ENCODE measurements at regions of chr22 and their contacts with region 1.

Region 1: DNA sequence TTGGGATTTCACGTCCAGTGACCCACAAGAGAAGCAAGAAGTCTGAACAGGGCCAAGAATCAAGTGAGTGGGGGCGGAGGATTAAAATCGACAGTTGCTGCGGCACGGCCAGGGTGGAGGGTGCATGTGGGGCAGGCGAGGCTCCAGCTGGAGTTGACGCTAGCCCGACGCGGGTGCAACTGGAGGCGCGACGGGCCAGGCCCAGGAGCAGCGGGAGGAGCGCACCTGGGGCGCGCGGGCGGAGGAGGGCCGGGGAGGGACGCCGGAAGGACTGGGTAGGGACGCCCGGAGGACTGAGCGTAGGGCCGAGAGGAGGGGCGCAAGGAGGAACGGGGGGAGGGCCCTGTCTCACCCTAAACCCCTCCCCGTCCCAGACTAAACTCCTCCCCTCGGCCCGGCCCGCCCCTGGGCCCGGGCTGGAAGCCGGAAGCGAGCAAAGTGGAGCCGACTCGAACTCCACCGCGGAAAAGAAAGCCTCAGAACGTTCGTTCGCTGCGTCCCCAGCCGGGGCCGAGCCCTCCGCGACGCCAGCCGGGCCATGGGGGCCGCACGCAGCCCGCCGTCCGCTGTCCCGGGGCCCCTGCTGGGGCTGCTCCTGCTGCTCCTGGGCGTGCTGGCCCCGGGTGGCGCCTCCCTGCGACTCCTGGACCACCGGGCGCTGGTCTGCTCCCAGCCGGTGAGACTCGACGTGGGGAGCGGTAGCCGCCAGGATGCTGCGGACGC is at the start of gene IL17RA:
- DNase-seq: peak; percentile 90 to 98 (median 94)
- ATAC-seq: peak; percentile 90
- H3K4me3 ChIP-seq: peak within 1 kb of the TSS; percentile 48 to 80
- H3K4me3 Mint-ChIP-seq: peak within 1 kb of the TSS; percentile 96
- H3K27ac ChIP-seq: peak within 1 kb of the TSS; percentile 65 to 79
- H3K27ac Mint-ChIP-seq: peak within 1 kb of the TSS; percentile 91
- H3K4me1 ChIP-seq: peaks cover 34% of the 10 kb centered on the region
- H3K4me1 Mint-ChIP-seq: peaks cover 41% of the 10 kb centered on the region
- H3K27me3 ChIP-seq: no peaks in the 10 kb centered on the region
- H3K27me3 Mint-ChIP-seq: no peaks in the 10 kb centered on the region
- CTCF ChIP-seq: no peak
- total RNA-seq, gene IL17RA: 20.4 to 24.7 TPM

Region 2: GRCh38 chr22:17095538-17095937 is 10.8 kb after region 1 on chr22:
- CTCF ChIA-PET with region 1: interaction called, 21 read pairs
- POLR2A ChIA-PET with region 1: interaction called, 12 read pairs
- intact Hi-C with region 1: loop called (anchors 1 to 2 kb)
- DNase-seq: no peak
- ATAC-seq: no peak
- H3K4me3 ChIP-seq: no peak overlapping the region
- H3K4me3 Mint-ChIP-seq: no peak overlapping the region
- H3K27ac ChIP-seq: no peak overlapping the region
- H3K27ac Mint-ChIP-seq: peak overlapping the region; percentile 62
- H3K4me1 ChIP-seq: peaks cover 85% of the 10 kb centered on the region
- H3K4me1 Mint-ChIP-seq: peaks cover 87% of the 10 kb centered on the region
- H3K27me3 ChIP-seq: no peaks in the 10 kb centered on the region
- H3K27me3 Mint-ChIP-seq: no peaks in the 10 kb centered on the region
- CTCF ChIP-seq: no peak

Region 3: DNA sequence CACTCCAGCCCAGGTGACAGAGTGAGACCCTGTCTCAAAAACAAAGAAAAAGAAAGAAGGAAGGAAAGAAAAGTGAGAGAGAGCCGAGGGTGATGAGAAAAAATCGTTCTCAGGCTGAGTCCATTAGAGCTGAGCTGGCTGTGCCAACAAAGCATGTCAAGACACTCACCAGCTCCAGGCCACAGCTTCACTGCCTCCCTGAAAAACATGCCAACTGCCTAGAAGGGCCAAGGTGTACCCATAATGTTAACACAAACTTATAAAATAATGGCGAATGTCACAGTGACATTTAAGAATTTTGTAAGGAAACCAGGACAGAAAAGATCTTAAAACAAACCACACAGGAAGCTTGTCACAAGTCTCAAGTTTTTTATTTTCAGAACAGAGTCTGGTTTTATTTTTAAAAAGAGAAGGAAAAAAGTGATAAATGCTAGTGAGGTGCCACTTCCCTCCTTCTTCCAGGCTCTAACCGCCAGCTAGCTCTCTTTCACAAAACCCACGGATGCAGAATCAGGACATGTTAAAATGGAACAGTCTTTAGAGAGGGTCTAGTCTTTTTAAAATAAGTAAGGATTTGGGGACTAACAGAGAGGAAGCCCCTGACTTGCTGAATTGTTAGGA is 31.3 kb after region 1 on chr22:
- CTCF ChIA-PET with region 1: interaction called, 3 read pairs
- POLR2A ChIA-PET with region 1: interaction called, 16 read pairs
- intact Hi-C with region 1: loop called (anchors 2 to 5 kb)
- DNase-seq: peak in 1 of 9 experiments; percentile 28
- ATAC-seq: no peak
- H3K4me3 ChIP-seq: no peak overlapping the region
- H3K4me3 Mint-ChIP-seq: peak overlapping the region; percentile 65
- H3K27ac ChIP-seq: peak overlapping the region; percentile 6 to 60
- H3K27ac Mint-ChIP-seq: peak overlapping the region; percentile 83
- H3K4me1 ChIP-seq: peaks cover 63% of the 10 kb centered on the region
- H3K4me1 Mint-ChIP-seq: peaks cover 77% of the 10 kb centered on the region
- H3K27me3 ChIP-seq: no peaks in the 10 kb centered on the region
- H3K27me3 Mint-ChIP-seq: no peaks in the 10 kb centered on the region
- CTCF ChIP-seq: no peak

Region 4: GRCh38 chr22:17145021-17145680 is 60.4 kb after region 1 on chr22:
- CTCF ChIA-PET with region 1: no interaction called
- POLR2A ChIA-PET with region 1: no interaction called
- intact Hi-C with region 1: no loop called
- DNase-seq: no peak
- ATAC-seq: no peak
- H3K4me3 ChIP-seq: no peak overlapping the region
- H3K4me3 Mint-ChIP-seq: no peak overlapping the region
- H3K27ac ChIP-seq: no peak overlapping the region
- H3K27ac Mint-ChIP-seq: no peak overlapping the region
- H3K4me1 ChIP-seq: no peaks in the 10 kb centered on the region
- H3K4me1 Mint-ChIP-seq: peaks cover 5% of the 10 kb centered on the region
- H3K27me3 ChIP-seq: no peaks in the 10 kb centered on the region
- H3K27me3 Mint-ChIP-seq: no peaks in the 10 kb centered on the region
- CTCF ChIP-seq: no peak

Region 5: DNA sequence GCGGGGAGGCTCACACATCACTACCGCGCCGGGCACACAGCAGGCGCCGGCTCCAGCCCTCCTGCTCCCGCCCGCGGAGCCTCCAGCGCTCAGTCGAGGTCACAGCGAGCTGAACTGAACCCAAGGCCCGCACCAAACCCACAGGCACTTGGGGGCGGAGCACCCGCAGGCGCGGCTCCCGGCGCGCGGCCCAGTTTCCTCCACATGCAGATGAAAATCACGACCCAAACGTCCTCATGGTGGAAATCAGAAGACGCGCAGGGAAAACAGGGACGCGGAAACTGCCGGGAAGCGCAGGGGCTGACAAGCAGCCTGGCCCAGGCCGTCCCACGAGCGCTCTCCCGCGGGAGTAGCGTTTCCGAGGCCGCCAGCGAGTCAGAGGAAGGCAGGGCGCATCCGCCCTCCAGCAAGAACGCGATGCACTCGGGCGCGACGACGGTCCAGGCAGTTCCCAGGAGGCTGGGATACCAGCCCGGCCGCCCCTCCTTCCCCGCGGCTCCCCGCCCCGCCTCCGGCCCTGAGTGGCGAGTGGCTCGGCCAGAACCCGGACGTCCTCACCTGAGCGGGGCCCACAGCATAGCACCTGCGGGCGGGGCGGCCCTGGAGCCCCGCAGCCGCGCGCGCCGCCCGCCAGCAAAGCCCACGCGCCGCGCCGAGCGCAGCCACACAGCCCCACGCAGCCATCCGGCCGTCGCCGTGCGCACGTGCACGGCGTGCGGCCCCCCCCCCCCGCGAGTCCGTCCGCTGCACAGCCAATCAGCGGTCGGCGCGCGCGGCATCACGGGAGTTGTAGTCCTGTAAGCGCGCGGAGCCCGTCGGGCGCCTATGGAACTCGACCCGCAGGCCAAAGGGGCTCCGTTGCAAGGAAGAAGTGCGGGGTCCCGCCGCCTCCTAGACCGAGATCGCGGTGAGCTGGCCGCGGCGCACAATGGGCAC is 74.1 kb after region 1 on chr22 and contains the start of gene HDHD5:
- CTCF ChIA-PET with region 1: interaction called, 3 read pairs
- POLR2A ChIA-PET with region 1: interaction called, 8 read pairs
- intact Hi-C with region 1: loop called (anchors 1 kb)
- DNase-seq: peak; percentile 78 to 93 (median 90)
- ATAC-seq: peak; percentile 92
- H3K4me3 ChIP-seq: peak within 1 kb of the TSS; percentile 80 to 89
- H3K4me3 Mint-ChIP-seq: peak within 1 kb of the TSS; percentile 86
- H3K27ac ChIP-seq: peak within 1 kb of the TSS; percentile 56 to 64
- H3K27ac Mint-ChIP-seq: peak within 1 kb of the TSS; percentile 55
- H3K4me1 ChIP-seq: peaks cover 27% of the 10 kb centered on the region
- H3K4me1 Mint-ChIP-seq: peaks cover 36% of the 10 kb centered on the region
- H3K27me3 ChIP-seq: no peaks in the 10 kb centered on the region
- H3K27me3 Mint-ChIP-seq: no peaks in the 10 kb centered on the region
- CTCF ChIP-seq: no peak
- total RNA-seq, gene HDHD5: 9.2 to 11.0 TPM

Region 6: DNA sequence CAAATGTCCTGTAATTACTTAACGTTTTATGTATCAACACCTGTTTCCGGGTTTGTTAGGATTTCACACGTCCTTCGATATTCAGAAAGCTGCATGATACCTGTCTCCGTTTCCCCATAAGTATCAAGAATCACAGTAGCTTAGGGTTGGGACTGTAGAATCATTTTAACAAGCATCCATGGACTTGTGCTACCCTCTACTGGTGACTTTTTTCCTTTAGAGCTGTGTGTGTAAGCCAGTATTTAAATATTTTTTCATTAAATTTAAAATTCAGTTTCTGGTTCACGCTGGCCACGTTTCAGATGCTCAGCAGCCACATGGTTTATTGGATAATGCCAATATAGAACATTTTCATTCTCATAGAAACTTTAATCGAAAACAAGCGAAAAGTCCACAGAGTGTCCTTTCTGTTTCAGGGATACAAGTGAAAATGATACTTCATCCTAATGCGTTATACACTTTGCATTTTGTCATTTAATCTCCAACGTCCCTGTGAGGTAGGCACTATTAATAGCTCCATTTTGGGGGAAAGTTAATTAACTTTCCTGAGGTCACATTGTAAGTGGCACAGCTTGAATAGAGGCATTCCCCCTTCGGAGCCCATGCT is 417.1 kb after region 1 on chr22:
- CTCF ChIA-PET with region 1: interaction called, 18 read pairs
- POLR2A ChIA-PET with region 1: no interaction called
- intact Hi-C with region 1: no loop called
- DNase-seq: peak in 3 of 9 experiments; percentile 30 to 77 (median 64)
- ATAC-seq: peak; percentile 73
- H3K4me3 ChIP-seq: no peak overlapping the region
- H3K4me3 Mint-ChIP-seq: no peak overlapping the region
- H3K27ac ChIP-seq: no peak overlapping the region
- H3K27ac Mint-ChIP-seq: no peak overlapping the region
- H3K4me1 ChIP-seq: no peaks in the 10 kb centered on the region
- H3K4me1 Mint-ChIP-seq: peaks cover 2% of the 10 kb centered on the region
- H3K27me3 ChIP-seq: no peaks in the 10 kb centered on the region
- H3K27me3 Mint-ChIP-seq: peaks cover 8% of the 10 kb centered on the region
- CTCF ChIP-seq: peak; percentile 70

Region 7: GRCh38 chr22:17638432-17639246 is 553.9 kb after region 1 on chr22 and contains the start of gene BCL2L13:
- CTCF ChIA-PET with region 1: no interaction called
- POLR2A ChIA-PET with region 1: interaction called, 3 read pairs
- intact Hi-C with region 1: loop called (anchors 2 kb)
- DNase-seq: peak; percentile 73 to 93 (median 89)
- ATAC-seq: peak; percentile 92
- H3K4me3 ChIP-seq: peak within 1 kb of the TSS; percentile 67 to 90
- H3K4me3 Mint-ChIP-seq: peak within 1 kb of the TSS; percentile 92
- H3K27ac ChIP-seq: peak within 1 kb of the TSS; percentile 98 to 99
- H3K27ac Mint-ChIP-seq: peak within 1 kb of the TSS; percentile 98
- H3K4me1 ChIP-seq: peaks cover 21% of the 10 kb centered on the region
- H3K4me1 Mint-ChIP-seq: peaks cover 29% of the 10 kb centered on the region
- H3K27me3 ChIP-seq: no peaks in the 10 kb centered on the region
- H3K27me3 Mint-ChIP-seq: no peaks in the 10 kb centered on the region
- CTCF ChIP-seq: no peak
- total RNA-seq, gene BCL2L13: 7.8 to 9.5 TPM

Region 8: GRCh38 chr22:18077639-18078328 is 993.1 kb after region 1 on chr22 and contains the start of gene PEX26:
- CTCF ChIA-PET with region 1: no interaction called
- POLR2A ChIA-PET with region 1: no interaction called
- intact Hi-C with region 1: loop called in 1 of 2 experiments (anchors 2 kb)
- DNase-seq: peak; percentile 91 to 98 (median 94)
- ATAC-seq: peak; percentile 97
- H3K4me3 ChIP-seq: peak within 1 kb of the TSS; percentile 89 to 99
- H3K4me3 Mint-ChIP-seq: peak within 1 kb of the TSS; percentile 98
- H3K27ac ChIP-seq: peak within 1 kb of the TSS; percentile 78 to 91
- H3K27ac Mint-ChIP-seq: peak within 1 kb of the TSS; percentile 100
- H3K4me1 ChIP-seq: peaks cover 30% of the 10 kb centered on the region
- H3K4me1 Mint-ChIP-seq: peaks cover 55% of the 10 kb centered on the region
- H3K27me3 ChIP-seq: no peaks in the 10 kb centered on the region
- H3K27me3 Mint-ChIP-seq: no peaks in the 10 kb centered on the region
- CTCF ChIP-seq: no peak
- total RNA-seq, gene PEX26: 22.5 to 23.0 TPM

Measured in CD8-positive, alpha-beta T cell (primary cell).